K562 (cell line): ENCODE measurements at regions of chr17 and their contacts with region 1.

Region 1: DNA sequence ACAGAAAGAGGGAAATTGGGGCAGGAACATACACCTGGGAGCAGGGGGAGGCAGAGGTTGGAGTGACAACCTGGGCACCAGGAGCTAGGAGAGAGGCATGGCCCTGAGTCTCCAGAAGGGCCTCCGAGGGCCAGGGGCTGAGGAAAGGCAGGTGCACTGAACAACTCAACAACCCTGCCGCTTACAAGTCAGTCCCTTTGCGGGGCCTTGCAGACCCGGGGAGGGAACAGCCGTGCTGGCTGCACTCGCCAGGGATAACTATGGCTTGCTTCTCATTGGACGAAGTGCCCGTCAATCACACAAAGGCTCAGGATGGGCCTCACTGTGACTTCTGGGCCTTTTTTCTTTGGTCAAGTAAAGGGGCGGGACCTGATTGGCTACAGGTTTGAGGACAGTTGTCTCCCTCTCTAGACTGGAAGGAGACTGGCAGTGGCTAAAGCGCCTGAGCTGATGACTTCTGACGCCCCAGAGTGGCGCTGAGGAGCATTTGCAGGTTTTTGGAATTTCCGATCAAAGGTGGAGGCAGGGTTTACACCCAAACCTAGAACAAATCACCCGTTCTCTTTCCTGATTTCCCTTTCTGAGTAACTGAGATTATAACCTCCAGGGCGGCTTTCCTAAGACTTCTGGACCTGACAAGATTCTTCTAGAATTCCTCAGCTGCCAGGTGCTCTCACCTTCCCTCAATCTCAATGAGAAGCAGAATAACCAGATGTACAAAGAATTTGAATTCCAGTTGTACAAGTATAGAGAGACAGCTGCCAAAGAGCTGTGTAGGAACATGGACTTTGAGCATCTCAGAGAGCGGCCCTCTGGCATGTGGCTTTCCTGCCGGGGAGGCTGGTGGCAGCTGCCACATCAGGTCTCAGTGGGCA is 27.6 kb upstream of the ST6GALNAC2 start:
- DNase-seq: peak; percentile 51 to 67 (median 61)
- ATAC-seq: peak; percentile 87
- H3K4me3 ChIP-seq: no peak overlapping the region
- H3K27ac ChIP-seq: no peak overlapping the region
- H3K4me1 ChIP-seq: peaks cover 3 to 11% of the 10 kb centered on the region in 2 experiments; a peak in 4 of 5 replicates
- H3K27me3 ChIP-seq: no peaks in the 10 kb centered on the region
- CTCF ChIP-seq: peak; percentile 28 to 92 (median 78); a peak in 5 of 6 replicates
- EP300 ChIP-seq: no peak
- POLR2A ChIP-seq: no peak
- RAD21 ChIP-seq: peak in 1 of 2 experiments; percentile 55; a peak in 2 of 4 replicates

Region 2: GRCh38 chr17:76623271-76624146 is 10.3 kb after region 1 on chr17:
- CTCF ChIA-PET with region 1: no interaction called
- POLR2A ChIA-PET with region 1: interaction called, 33 read pairs
- in situ Hi-C with region 1: no loop called
- intact Hi-C with region 1: no loop called
- DNase-seq: peak; percentile 74 to 84 (median 78)
- ATAC-seq: peak; percentile 95
- H3K4me3 ChIP-seq: no peak overlapping the region
- H3K27ac ChIP-seq: peak overlapping the region; percentile 54; the same call in 2 of the 3 replicates
- H3K4me1 ChIP-seq: peaks cover 5 to 8% of the 10 kb centered on the region in 2 experiments; a peak in 4 of 5 replicates
- H3K27me3 ChIP-seq: no peaks in the 10 kb centered on the region
- CTCF ChIP-seq: peak; percentile 91 to 94 (median 93)
- EP300 ChIP-seq: peak; percentile 13; the same call in 1 of the 2 replicates
- POLR2A ChIP-seq: no peak; the same call in 1 of the 2 replicates
- RAD21 ChIP-seq: peak; percentile 87 to 92

Region 3: GRCh38 chr17:76658001-76658662 is 44.9 kb after region 1 on chr17:
- CTCF ChIA-PET with region 1: no interaction called
- POLR2A ChIA-PET with region 1: no interaction called
- in situ Hi-C with region 1: no loop called
- intact Hi-C with region 1: no loop called
- DNase-seq: no peak
- ATAC-seq: peak; percentile 16; the same call in 1 of the 3 replicates
- H3K4me3 ChIP-seq: no peak overlapping the region
- H3K27ac ChIP-seq: no peak overlapping the region
- H3K4me1 ChIP-seq: peaks cover 17 to 21% of the 10 kb centered on the region in 2 experiments
- H3K27me3 ChIP-seq: no peaks in the 10 kb centered on the region
- CTCF ChIP-seq: no peak
- EP300 ChIP-seq: no peak
- POLR2A ChIP-seq: no peak
- RAD21 ChIP-seq: no peak